Activated naive CD4-positive, alpha-beta T cell treated with anti-CD3 and anti-CD28 coated beads for 36 hours (primary cell): ENCODE measurements at regions of chr18 and their contacts with region 1.

Region 1: GRCh38 chr18:62522504-62523254 is at the start of gene ZCCHC2:
- DNase-seq: peak; percentile 98
- H3K4me3 Mint-ChIP-seq: peak within 1 kb of the TSS; percentile 92
- H3K27ac Mint-ChIP-seq: peak within 1 kb of the TSS; percentile 98
- H3K4me1 Mint-ChIP-seq: peaks cover 14% of the 10 kb centered on the region
- H3K27me3 Mint-ChIP-seq: no peaks in the 10 kb centered on the region
- total RNA-seq, gene ZCCHC2: 22.1 to 23.3 TPM

Region 2: GRCh38 chr18:62138461-62139235 is 384.0 kb before region 1 on chr18:
- CTCF ChIA-PET with region 1: no interaction called
- intact Hi-C with region 1: no loop called
- DNase-seq: no peak
- H3K4me3 Mint-ChIP-seq: no peak overlapping the region
- H3K27ac Mint-ChIP-seq: no peak overlapping the region
- H3K4me1 Mint-ChIP-seq: no peaks in the 10 kb centered on the region
- H3K27me3 Mint-ChIP-seq: no peaks in the 10 kb centered on the region

Region 3: GRCh38 chr18:62324917-62325805 is 197.5 kb before region 1 on chr18 and contains the start of gene TNFRSF11A:
- CTCF ChIA-PET with region 1: no interaction called
- intact Hi-C with region 1: loop called (anchors 1 kb)
- DNase-seq: peak; percentile 73
- H3K4me3 Mint-ChIP-seq: peak within 1 kb of the TSS; percentile 77
- H3K27ac Mint-ChIP-seq: peak within 1 kb of the TSS; percentile 28
- H3K4me1 Mint-ChIP-seq: peaks cover 19% of the 10 kb centered on the region
- H3K27me3 Mint-ChIP-seq: peaks cover 70% of the 10 kb centered on the region
- total RNA-seq, gene TNFRSF11A: 3.1 to 3.5 TPM

Region 4: DNA sequence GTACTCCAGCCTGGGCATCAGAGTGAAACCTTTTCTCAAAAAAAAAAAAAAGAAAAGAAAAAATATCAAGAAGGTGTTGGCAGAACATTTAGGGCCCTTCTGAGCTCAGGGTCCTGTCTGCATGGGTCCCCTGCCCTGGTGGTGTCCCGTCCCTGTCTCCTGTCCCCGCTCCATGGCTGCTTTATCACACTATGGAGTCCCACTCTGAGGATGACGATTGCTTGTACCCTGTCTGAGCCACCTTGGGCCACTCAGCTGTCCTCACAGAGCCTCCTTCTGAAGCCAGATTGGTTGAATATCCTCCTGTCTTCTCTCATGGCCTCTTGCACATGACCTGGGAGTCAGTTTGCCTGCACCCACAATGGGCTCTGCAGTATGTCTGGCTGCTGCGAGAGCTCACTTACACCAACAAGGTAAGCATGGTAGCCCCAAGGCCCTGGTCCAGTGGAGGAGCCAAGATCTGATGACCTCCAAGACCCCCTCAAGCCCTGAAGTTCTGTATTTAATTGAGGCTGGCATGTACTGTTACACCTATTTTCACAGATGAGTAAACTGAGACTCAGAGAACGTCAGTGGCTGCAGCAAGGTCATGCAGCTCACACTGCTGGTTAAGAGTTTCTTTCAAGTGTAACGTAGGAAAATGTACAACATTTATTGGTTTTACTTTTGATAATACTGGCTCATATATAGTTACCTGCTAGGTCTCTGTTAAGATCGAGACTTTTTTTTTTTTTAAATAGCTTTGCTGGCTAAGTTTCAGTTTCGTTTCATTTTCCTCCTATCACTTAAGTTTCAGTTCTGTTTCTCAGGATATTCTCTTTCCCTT is 16.8 kb before region 1 on chr18:
- CTCF ChIA-PET with region 1: interaction called, 4 read pairs
- intact Hi-C with region 1: loop called (anchors 1 kb)
- DNase-seq: peak; percentile 63
- H3K4me3 Mint-ChIP-seq: peak overlapping the region; percentile 55
- H3K27ac Mint-ChIP-seq: peak overlapping the region; percentile 86
- H3K4me1 Mint-ChIP-seq: peaks cover 20% of the 10 kb centered on the region
- H3K27me3 Mint-ChIP-seq: no peaks in the 10 kb centered on the region

Region 5: DNA sequence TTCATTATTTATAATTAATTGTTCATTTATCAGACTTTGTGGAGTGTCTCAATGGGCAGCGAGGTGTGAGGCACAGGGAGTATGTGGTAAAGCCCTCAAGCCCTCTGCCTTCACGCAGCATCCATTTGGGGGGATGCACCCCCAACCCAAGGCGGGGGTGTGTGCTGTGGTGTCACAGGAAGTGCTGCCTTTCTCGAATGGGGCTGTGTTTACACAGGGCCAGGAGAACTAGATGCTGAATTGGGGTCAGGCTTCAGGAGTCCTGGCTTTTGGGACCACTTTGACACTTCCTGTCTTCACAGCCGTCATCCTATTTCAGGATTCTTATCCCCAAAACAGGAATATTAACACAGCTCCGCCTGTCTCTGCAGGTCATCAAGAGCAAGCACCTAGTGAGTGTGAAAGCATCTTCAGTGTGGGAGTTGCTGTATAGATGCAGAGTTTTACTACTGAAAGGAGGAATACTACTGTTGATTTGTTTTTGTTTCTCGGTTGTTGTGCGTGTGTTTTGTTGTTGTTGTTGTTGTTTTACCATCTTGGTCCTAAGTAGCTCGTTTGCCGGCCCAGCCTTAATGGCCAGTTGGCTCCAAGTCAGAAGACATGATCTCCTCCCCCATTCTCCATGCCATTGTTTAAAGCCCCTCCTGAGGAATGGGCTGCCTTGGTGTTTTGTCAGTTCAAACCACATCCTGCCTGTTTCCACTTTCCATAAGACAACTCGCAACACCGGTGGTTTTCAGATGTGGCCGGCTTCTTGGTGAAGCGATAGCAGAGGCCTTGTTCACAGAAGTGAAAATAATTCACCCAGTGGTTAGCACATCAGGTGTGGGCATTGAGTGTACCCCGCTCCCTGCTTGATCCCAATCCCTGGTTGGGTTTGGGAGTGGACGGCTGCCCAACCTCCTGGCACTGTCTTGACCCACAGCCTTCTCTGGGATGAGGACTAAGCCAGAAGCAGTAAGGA is 575.6 kb after region 1 on chr18:
- CTCF ChIA-PET with region 1: no interaction called
- intact Hi-C with region 1: loop called (anchors 10 kb)
- DNase-seq: peak; percentile 77
- H3K4me3 Mint-ChIP-seq: no peak overlapping the region
- H3K27ac Mint-ChIP-seq: peak overlapping the region; percentile 11
- H3K4me1 Mint-ChIP-seq: peaks cover 49% of the 10 kb centered on the region
- H3K27me3 Mint-ChIP-seq: no peaks in the 10 kb centered on the region

Region 6: GRCh38 chr18:63216516-63217311 is 694.0 kb after region 1 on chr18:
- CTCF ChIA-PET with region 1: no interaction called
- intact Hi-C with region 1: loop called (anchors 10 kb)
- DNase-seq: peak; percentile 48
- H3K4me3 Mint-ChIP-seq: peak overlapping the region; percentile 64
- H3K27ac Mint-ChIP-seq: peak overlapping the region; percentile 94
- H3K4me1 Mint-ChIP-seq: peaks cover 89% of the 10 kb centered on the region
- H3K27me3 Mint-ChIP-seq: no peaks in the 10 kb centered on the region

Region 7: DNA sequence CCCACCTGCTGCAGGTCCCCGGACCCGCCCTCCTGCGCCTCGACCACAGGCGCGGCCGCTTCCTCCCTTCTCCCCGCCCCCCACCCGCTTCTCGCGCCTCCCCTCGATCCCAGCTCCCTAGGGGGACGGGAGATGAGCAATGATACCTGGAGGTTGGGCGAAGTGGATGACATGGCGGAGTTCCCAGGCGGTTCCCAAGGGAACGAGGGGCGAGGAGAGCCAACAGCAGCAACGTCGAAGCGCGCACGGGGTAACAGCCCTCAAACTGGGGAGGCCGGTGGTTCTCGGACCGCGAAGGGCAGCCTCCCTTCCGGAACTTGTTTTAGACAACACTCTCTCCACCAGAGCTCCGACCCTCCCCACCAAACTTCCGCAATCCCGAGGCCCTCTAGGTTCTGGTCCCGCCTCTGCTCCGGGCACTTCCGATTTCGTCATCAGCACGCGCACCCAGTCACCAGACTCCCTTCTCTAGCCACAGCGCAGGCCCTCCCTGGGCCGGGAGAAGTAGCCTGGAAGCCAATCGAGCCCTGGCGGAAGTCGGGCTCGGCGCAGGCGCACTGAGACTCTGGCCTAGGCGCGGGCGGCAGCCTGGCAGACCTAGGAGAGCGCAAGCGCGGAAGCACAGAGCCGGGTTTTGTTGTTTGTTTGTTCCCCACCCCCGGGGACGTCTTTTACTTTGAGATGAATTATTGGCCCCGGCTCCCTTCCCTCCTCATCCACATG is 899.6 kb after region 1 on chr18 and contains the start of gene VPS4B:
- CTCF ChIA-PET with region 1: no interaction called
- intact Hi-C with region 1: loop called (anchors 1 kb)
- DNase-seq: peak; percentile 100
- H3K4me3 Mint-ChIP-seq: peak within 1 kb of the TSS; percentile 83
- H3K27ac Mint-ChIP-seq: peak within 1 kb of the TSS; percentile 95
- H3K4me1 Mint-ChIP-seq: peaks cover 28% of the 10 kb centered on the region
- H3K27me3 Mint-ChIP-seq: no peaks in the 10 kb centered on the region
- total RNA-seq, gene VPS4B: 28.7 to 30.1 TPM